Left cardiac atrium (tissue), 4 donors: ENCODE measurements at regions of chr16 and their contacts with region 1.

Region 1: GRCh38 chr16:56866943-56867830 is 2.2 kb downstream of the SLC12A3 start:
- DNase-seq: no peak
- ATAC-seq: peak; percentile 10 to 53

Region 2: DNA sequence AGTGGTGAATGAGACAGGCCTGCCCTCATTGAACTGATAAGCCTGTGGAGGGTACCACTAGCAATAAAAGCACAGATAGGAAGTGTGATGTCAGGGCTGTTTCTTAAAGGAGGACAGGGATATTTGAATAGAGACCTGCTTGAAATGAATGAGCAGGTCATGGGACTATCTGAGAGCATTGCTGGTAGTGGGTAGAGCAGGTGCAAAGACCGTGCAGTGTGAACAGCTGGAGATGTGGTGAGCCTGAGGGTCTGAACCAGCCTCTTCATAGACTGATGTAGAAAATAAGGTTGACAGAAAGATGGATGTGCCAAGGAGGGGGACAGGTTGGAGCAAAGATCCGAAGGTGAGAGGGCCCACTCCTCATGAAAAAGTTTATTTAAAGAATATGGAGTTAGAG is 134.8 kb before region 1 on chr16:
- intact Hi-C with region 1: no loop called
- DNase-seq: no peak
- ATAC-seq: no peak

Region 3: GRCh38 chr16:56950881-56951771 is 83.9 kb after region 1 on chr16:
- intact Hi-C with region 1: loop called (anchors 5 kb)
- DNase-seq: peak; percentile 45
- ATAC-seq: peak; percentile 69

Region 4: DNA sequence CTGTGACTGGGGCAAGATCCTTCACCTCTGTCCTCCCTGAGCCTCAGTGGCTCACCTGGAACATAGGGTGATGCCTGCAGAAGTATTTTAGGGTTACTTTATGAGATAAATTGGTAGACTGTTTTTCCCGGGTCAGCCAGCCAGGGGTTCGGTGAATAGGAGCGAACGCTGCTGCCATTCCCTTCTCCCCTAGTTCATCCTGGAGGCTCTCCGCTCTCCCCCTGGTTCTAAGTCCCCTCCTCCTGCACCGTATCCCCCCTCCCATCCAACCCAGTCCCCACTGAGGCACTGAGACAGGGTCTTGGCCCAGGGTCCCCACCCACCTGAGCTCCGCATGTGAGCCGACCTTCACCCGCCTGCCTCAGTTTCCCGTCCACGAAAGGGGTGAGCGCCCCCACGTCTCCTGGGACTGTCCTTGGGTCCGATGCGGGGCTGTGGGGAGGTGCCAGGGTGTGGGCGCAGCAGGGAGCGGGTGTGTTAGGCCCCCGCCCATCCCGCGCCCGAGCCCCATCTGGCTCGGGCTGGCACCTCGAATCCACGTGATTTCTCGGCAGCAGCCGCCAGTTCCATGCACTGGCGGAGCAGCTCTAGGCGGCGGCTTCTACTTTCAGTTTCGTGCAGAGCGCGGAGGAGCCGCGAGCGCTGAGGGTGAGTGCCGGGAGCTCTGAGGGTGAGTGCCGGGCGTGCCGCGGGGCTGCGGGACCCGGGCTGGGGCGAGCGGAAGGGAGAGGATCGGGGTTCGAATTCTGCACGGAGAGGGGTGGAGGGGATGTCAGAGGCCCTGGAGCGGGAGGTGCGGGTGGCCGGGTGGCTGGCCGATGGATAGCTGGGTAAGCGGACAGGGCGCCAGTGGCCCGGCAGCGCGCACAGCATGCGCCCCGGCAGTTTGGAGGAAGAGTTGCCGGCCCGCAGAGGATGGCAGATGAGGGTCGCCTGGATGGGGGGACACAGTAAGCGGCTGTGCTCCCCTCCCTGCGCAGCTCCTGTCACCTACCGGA is 122.1 kb after region 1 on chr16 and contains the start of gene NLRC5:
- intact Hi-C with region 1: no loop called
- DNase-seq: peak; percentile 92
- ATAC-seq: peak; percentile 92 to 96
- total RNA-seq, gene NLRC5: 14.2 to 31.5 TPM

Region 5: GRCh38 chr16:57045694-57046381 is 178.7 kb after region 1 on chr16:
- intact Hi-C with region 1: loop called (anchors 5 to 10 kb)
- DNase-seq: peak; percentile 76
- ATAC-seq: peak; percentile 70 to 81

Region 6: GRCh38 chr16:57167953-57168352 is 300.8 kb after region 1 on chr16:
- intact Hi-C with region 1: loop called in 1 of 2 experiments (anchors 10 kb)
- DNase-seq: no peak
- ATAC-seq: peak; percentile 80

Region 7: DNA sequence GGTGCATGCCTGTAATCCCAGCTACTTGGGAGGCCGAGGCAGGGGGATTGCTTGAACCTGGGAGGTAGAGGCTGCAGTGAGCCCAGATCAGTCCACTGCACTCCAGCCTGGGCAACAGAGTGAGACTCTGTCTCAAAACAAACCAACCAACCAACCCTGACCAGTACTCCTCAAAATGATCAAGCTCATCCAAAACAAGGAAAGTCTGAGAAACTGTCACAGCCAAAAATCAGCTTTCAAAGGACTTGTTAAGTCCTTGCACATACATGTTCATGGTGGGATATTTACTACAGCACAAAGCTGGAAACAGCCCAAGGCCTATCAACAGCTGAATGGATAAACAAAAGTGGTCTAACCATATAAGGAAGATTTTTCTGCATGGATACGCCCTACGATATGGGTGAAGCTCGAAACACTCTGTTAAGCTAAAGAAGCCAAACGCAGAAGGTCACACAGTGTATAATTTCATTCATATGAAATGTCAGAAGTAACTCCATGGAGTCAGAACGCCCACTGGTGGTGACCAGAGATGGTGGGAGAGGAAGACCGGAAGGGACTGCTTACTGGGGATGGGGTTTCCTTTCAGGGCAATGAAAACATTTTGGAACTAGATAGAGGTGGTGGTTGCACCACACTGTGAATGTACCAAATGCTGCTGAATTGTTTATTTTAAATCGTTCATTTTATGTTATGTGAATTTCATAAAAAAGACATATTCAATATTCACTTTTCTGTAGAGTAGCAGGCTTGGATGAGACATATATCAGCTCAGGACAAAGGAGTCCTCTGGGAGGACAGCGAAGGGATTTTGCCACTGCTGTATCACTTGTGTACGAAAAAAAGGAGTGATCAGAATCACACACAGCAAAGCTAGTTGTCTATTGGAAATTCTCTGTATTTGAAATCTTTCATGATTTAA is 555.1 kb after region 1 on chr16:
- intact Hi-C with region 1: loop called in 1 of 2 experiments (anchors 10 kb)
- DNase-seq: peak; percentile 62
- ATAC-seq: peak; percentile 60 to 78